OCI-LY7 (cell line): ENCODE measurements at regions of chr12 and their contacts with region 1.

Region 1: DNA sequence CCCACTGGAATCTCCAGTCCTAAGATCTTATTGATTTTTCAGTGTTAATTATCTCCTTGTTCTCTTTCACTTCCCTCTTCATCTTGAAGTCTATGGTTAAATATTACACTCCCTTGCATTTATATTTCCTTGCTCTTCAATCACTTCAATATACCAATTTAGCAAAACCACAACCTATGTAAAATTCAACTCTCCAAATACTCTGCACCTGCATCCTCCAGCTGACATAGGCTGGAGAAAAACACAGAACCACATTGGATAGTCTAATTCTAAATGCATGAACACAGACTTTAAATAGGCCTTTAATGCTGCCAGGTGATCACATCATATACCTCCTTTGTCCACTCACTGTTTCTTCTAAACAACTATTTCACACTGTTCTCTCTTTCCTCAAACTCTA is 253.8 kb upstream of the GARIN6 start:
- DNase-seq: peak; percentile 97
- H3K4me3 ChIP-seq: peak overlapping the region; percentile 21
- H3K27ac ChIP-seq: peak overlapping the region; percentile 99
- H3K4me1 ChIP-seq: peaks cover 76% of the 10 kb centered on the region
- CTCF ChIP-seq: no peak

Region 2: DNA sequence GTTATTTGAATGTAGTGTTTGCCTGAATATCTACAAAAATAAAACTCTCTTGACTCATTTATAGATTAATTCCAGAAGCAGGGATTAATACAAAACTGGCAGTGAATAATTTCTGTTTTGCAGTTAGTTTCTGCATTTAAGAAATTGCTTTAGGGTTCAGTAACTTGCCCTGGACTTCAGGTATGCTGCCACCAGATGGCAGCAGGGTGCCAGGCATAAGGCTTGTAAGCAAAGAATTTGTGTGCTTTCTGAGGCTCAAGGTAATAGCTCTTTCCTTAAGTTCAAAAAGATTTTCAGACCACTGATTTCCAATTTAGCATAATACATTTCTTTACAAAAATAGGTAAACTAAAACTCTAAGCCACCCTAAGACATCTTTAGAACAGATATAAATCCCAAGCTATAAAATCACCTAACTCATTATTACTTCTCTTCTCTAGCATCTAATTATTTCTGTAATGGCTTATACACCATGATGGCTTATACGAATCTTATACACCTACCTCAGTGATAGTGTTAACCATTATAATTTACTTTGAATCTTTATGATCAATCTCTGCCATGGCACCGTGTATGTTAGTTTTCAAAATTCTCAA is 350.3 kb before region 1 on chr12:
- CTCF ChIA-PET with region 1: no interaction called
- POLR2A ChIA-PET with region 1: no interaction called
- intact Hi-C with region 1: loop called (anchors 2 kb)
- DNase-seq: peak; percentile 85
- H3K4me3 ChIP-seq: no peak overlapping the region
- H3K27ac ChIP-seq: no peak overlapping the region
- H3K4me1 ChIP-seq: peaks cover 18% of the 10 kb centered on the region
- CTCF ChIP-seq: peak; percentile 99

Region 3: GRCh38 chr12:99334285-99335056 is 59.3 kb before region 1 on chr12:
- CTCF ChIA-PET with region 1: interaction called, 3 read pairs
- POLR2A ChIA-PET with region 1: interaction called, 6 read pairs
- intact Hi-C with region 1: loop called (anchors 2 kb)
- DNase-seq: no peak
- H3K4me3 ChIP-seq: no peak overlapping the region
- H3K27ac ChIP-seq: peak overlapping the region; percentile 53
- H3K4me1 ChIP-seq: peaks cover 30% of the 10 kb centered on the region
- CTCF ChIP-seq: no peak

Region 4: GRCh38 chr12:99455348-99456035 is 61.7 kb after region 1 on chr12:
- CTCF ChIA-PET with region 1: no interaction called
- POLR2A ChIA-PET with region 1: no interaction called
- intact Hi-C with region 1: no loop called
- DNase-seq: no peak
- H3K4me3 ChIP-seq: no peak overlapping the region
- H3K27ac ChIP-seq: no peak overlapping the region
- H3K4me1 ChIP-seq: peaks cover 12% of the 10 kb centered on the region
- CTCF ChIP-seq: no peak

Region 5: DNA sequence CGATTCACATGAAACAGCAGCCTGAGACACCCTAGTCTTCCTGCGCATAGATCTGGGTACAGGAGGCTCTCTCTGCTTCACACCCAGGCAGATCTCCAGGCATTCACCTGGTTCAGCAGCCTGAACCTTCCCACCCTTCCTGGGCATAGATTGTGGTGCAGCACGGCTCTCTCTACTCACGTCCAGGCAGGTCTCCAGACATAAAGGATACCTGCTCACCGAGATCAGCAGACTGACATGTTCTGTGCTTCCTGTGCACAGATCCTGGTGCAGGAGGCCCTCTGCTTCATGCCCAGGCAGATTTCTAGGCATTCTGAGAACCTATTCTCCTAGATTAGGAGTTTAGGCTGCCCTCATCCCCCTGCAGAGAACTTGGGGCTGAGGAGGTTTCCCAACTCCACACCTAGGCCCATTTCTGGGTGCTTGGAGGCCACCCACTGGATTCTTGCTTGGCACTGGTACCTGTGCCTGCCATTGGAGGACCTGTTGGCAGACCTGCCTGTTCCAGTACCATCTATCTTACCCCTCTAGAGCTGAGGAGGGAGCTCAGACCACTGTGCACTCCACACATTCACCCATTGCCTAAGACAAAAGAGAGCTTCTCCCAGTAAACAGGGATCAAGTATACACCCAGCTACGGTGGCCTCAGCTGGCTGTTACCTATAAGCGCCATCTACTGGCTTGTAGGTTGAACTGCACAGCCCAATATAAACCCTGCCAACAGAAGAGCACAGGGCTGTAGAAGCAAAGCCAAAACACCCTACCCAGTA is 225.8 kb after region 1 on chr12:
- CTCF ChIA-PET with region 1: interaction called, 6 read pairs
- POLR2A ChIA-PET with region 1: interaction called, 5 read pairs
- intact Hi-C with region 1: loop called (anchors 1 kb)
- DNase-seq: peak; percentile 67
- H3K4me3 ChIP-seq: no peak overlapping the region
- H3K27ac ChIP-seq: peak overlapping the region; percentile 22
- H3K4me1 ChIP-seq: no peaks in the 10 kb centered on the region
- CTCF ChIP-seq: peak; percentile 91

Region 6: GRCh38 chr12:99746538-99746937 is 352.8 kb after region 1 on chr12:
- CTCF ChIA-PET with region 1: no interaction called
- POLR2A ChIA-PET with region 1: interaction called, 4 read pairs
- intact Hi-C with region 1: loop called (anchors 1 kb)
- DNase-seq: peak; percentile 59
- H3K4me3 ChIP-seq: no peak overlapping the region
- H3K27ac ChIP-seq: peak overlapping the region; percentile 97
- H3K4me1 ChIP-seq: peaks cover 57% of the 10 kb centered on the region
- CTCF ChIP-seq: peak; percentile 71